WTC11 (cell line): ENCODE measurements at regions of chr21 and their contacts with region 1.

Region 1: DNA sequence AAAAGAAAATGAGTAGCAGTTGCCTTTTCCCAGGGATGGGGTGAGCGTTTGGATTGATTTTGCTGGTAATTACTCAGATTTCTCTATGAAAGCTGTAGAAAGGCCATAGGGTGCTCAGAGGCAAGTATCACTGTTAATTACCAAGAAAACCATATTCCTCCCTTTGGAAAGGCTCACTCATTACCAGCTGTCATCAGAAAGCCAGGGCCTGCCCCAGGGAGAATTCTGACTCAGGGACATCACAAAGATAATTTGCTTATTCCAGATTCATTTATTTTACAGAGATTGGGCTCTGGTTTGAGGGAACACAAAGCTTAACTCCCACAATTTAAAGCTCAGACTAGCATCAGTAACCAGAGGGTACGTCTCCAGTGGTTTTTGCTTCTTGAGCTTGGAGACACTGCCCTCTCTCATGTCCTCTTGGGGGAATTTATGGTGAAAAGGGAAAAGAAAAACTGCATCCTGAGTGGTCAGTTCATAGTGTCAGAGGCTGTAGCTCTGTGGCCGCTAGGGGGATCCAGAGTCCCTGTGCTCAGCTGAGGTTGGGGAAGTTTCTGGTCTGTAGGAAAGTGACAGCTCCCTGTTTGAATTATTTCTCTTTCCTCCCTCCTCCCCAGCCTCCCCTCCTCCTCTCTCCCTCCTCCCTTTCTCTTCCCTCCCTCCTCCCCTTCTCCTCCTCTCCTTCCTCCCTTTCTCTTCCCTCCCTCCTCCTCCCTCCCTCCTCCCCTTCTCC is 204.3 kb downstream of the KCNJ6 start:
- DNase-seq: peak; percentile 75
- ATAC-seq: peak; percentile 96
- H3K4me3 Mint-ChIP-seq: no peak overlapping the region
- H3K27ac Mint-ChIP-seq: no peak overlapping the region
- H3K4me1 Mint-ChIP-seq: peaks cover 10% of the 10 kb centered on the region
- H3K27me3 Mint-ChIP-seq: no peaks in the 10 kb centered on the region
- CTCF ChIP-seq: peak; percentile 78

Region 2: DNA sequence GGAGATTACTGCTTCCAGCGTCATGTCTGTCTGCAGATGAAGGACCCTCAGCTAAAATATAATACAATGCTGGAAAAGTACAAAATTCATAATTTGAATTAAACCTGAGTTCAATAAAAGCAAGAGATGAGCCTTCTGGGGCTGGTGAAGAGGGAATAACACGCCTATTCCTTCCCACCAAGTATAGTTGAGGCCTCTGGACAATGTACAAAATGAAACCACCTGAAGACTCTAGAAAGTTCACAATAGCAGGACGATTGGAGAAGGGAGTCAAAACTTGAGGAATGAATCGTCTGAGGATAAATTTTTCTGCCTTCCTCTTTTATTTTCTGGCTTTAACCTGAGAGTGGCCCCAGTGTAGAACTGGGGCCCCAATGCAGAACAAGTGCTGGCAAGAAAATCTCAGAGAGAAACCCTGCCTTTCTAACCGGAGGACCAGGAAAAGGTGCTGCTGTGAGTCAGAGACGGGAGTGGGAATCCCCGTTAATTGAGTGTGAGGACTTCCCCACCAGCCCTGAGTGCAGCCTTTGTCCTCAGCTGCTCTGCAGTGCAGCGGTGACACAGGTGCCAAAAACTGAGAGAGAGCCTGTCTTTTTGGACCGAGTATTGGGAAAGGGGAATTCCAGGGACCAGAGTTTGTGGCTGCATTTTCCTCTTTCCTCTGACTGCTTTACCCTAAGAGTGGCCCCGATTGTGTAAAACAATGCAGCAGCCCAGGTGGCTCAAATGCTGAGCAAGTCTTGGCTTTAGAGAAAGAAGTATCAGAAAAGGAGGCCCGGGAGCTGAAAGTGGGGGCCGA is 80.5 kb before region 1 on chr21:
- CTCF ChIA-PET with region 1: no interaction called
- POLR2A ChIA-PET with region 1: no interaction called
- DNase-seq: peak; percentile 36
- ATAC-seq: peak; percentile 91
- H3K4me3 Mint-ChIP-seq: peak overlapping the region; percentile 27
- H3K27ac Mint-ChIP-seq: peak overlapping the region; percentile 93
- H3K4me1 Mint-ChIP-seq: peaks cover 36% of the 10 kb centered on the region
- H3K27me3 Mint-ChIP-seq: no peaks in the 10 kb centered on the region
- CTCF ChIP-seq: no peak

Region 3: GRCh38 chr21:37675202-37675801 is 36.7 kb before region 1 on chr21:
- CTCF ChIA-PET with region 1: interaction called, 26 read pairs
- POLR2A ChIA-PET with region 1: no interaction called
- DNase-seq: peak; percentile 85
- ATAC-seq: peak; percentile 87
- H3K4me3 Mint-ChIP-seq: peak overlapping the region; percentile 10; the same call in 1 of the 2 replicates
- H3K27ac Mint-ChIP-seq: no peak overlapping the region
- H3K4me1 Mint-ChIP-seq: peaks cover 32% of the 10 kb centered on the region
- H3K27me3 Mint-ChIP-seq: peaks cover 29% of the 10 kb centered on the region
- CTCF ChIP-seq: peak; percentile 97

Region 4: GRCh38 chr21:37758982-37759381 is 47.0 kb after region 1 on chr21:
- CTCF ChIA-PET with region 1: interaction called, 17 read pairs
- POLR2A ChIA-PET with region 1: no interaction called
- DNase-seq: peak; percentile 79
- ATAC-seq: peak; percentile 89
- H3K4me3 Mint-ChIP-seq: no peak overlapping the region
- H3K27ac Mint-ChIP-seq: no peak overlapping the region
- H3K4me1 Mint-ChIP-seq: peaks cover 27% of the 10 kb centered on the region
- H3K27me3 Mint-ChIP-seq: no peaks in the 10 kb centered on the region
- CTCF ChIP-seq: peak; percentile 65

Region 5: GRCh38 chr21:37829447-37829846 is 117.4 kb after region 1 on chr21:
- CTCF ChIA-PET with region 1: no interaction called
- POLR2A ChIA-PET with region 1: no interaction called
- DNase-seq: no peak
- ATAC-seq: no peak
- H3K4me3 Mint-ChIP-seq: no peak overlapping the region
- H3K27ac Mint-ChIP-seq: no peak overlapping the region
- H3K4me1 Mint-ChIP-seq: peaks cover 43% of the 10 kb centered on the region
- H3K27me3 Mint-ChIP-seq: no peaks in the 10 kb centered on the region
- CTCF ChIP-seq: no peak

Region 6: GRCh38 chr21:37916310-37917051 is 204.5 kb after region 1 on chr21 and contains the start of gene KCNJ6:
- CTCF ChIA-PET with region 1: interaction called, 28 read pairs
- POLR2A ChIA-PET with region 1: no interaction called
- DNase-seq: peak; percentile 87
- ATAC-seq: peak; percentile 83
- H3K4me3 Mint-ChIP-seq: peak within 1 kb of the TSS; percentile 86
- H3K27ac Mint-ChIP-seq: 0 out of 2 replicates have a peak within 1 kb of the TSS, but pooled peaks have one; percentile 39
- H3K4me1 Mint-ChIP-seq: peaks cover 39% of the 10 kb centered on the region
- H3K27me3 Mint-ChIP-seq: peaks cover 34% of the 10 kb centered on the region
- CTCF ChIP-seq: peak; percentile 39
- total RNA-seq, gene KCNJ6: 0.23 to 0.35 TPM (median 0.34 TPM) in 3 replicates